ENCODE measurements at regions of chr6 and their contacts with region 1.

Region 1: DNA sequence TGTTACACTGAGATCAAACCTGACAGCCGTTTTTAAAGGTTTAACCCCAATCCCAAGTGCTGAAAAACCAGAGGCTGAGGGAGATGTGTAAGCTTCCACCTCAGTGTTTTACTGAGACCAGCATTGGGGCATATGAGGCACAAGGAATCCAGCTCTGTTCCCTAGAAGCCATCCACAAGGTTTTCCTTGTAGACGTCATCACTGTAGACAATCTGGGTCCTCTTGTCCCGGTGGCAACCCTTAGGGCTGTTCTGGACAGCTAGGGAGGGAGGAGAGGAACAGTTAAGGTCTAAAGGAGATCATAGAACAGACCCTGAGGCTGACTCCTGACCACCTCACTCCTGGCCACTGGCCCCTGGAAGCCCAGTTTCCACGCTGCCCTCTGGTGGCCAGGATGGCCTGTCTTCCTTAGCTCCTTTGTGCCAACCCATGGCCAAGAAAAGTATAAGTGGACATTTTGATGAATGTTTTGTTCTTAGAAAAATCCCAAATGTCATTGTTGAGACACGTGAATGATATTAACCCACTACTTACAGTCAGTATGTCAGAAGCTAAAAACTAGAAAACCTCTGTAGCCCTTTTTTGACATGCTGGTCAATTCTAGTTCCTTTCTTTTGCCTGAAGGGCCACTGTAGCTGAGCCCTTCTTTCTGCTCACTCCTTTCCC is 6.4 kb downstream of the CFB start:
- DNase-seq: peak; percentile 70
- ATAC-seq: peak; percentile 87
- H3K4me3 Mint-ChIP-seq: no peak overlapping the region
- H3K27ac Mint-ChIP-seq: no peak overlapping the region; the same call in 1 of the 2 replicates
- H3K4me1 Mint-ChIP-seq: no peaks in the 10 kb centered on the region
- H3K27me3 Mint-ChIP-seq: peaks cover 18% of the 10 kb centered on the region
- CTCF ChIP-seq: peak; percentile 31

Region 2: DNA sequence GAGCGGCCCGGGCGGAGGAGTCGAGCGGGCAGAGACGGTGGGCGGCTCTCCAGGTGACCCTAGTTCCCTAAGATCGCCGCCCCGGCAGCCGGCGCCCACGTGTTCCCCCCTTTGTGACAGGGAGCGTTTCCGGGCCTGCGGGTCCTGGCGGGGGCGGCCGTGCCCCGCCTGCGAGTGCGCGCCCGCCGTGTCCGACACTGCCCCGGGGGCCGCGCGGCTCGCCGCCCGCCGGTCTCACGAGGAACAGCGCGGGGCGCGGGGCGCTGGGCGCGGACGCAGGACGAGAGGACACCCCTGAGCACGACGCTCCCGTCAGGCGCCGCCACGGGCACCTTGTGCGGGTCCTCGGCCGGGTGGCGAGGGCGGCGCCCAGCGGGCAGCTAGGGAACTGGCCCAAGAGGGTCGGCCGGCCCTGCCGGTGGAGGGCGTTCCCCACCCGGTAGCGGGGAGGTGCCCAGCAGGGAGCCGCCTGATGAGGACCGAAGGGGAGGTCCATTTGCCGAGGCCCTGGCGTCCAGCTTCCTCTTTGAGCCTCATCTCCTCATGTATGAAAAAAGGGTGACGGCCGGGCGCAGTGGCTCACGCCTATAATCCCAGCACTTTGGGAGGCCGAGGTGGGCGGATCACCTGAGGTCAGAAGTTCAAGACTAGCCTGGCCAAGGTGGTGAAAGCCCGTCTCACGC is 156.5 kb before region 1 on chr6 and contains the start of gene VARS1:
- CTCF ChIA-PET with region 1: interaction called, 10 read pairs
- POLR2A ChIA-PET with region 1: no interaction called
- DNase-seq: peak; percentile 96
- ATAC-seq: peak; percentile 84
- H3K4me3 Mint-ChIP-seq: peak within 1 kb of the TSS; percentile 99
- H3K27ac Mint-ChIP-seq: peak within 1 kb of the TSS; percentile 97
- H3K4me1 Mint-ChIP-seq: peaks cover 9% of the 10 kb centered on the region
- H3K27me3 Mint-ChIP-seq: no peaks in the 10 kb centered on the region
- CTCF ChIP-seq: peak; percentile 57
- total RNA-seq, gene VARS1: 147 to 177 TPM (median 161 TPM) in 3 replicates

Region 3: GRCh38 chr6:31907158-31907813 is 45.0 kb before region 1 on chr6:
- CTCF ChIA-PET with region 1: interaction called, 14 read pairs
- POLR2A ChIA-PET with region 1: no interaction called
- DNase-seq: no peak
- ATAC-seq: no peak
- H3K4me3 Mint-ChIP-seq: no peak overlapping the region
- H3K27ac Mint-ChIP-seq: no peak overlapping the region
- H3K4me1 Mint-ChIP-seq: peaks cover 14% of the 10 kb centered on the region
- H3K27me3 Mint-ChIP-seq: peaks cover 5% of the 10 kb centered on the region
- CTCF ChIP-seq: no peak

Region 4: GRCh38 chr6:31940256-31940664 is 12.0 kb before region 1 on chr6:
- CTCF ChIA-PET with region 1: interaction called, 13 read pairs
- POLR2A ChIA-PET with region 1: no interaction called
- DNase-seq: no peak
- ATAC-seq: no peak
- H3K4me3 Mint-ChIP-seq: no peak overlapping the region
- H3K27ac Mint-ChIP-seq: no peak overlapping the region; the same call in 1 of the 2 replicates
- H3K4me1 Mint-ChIP-seq: peaks cover 7% of the 10 kb centered on the region
- H3K27me3 Mint-ChIP-seq: peaks cover 24% of the 10 kb centered on the region
- CTCF ChIP-seq: no peak

Region 5: DNA sequence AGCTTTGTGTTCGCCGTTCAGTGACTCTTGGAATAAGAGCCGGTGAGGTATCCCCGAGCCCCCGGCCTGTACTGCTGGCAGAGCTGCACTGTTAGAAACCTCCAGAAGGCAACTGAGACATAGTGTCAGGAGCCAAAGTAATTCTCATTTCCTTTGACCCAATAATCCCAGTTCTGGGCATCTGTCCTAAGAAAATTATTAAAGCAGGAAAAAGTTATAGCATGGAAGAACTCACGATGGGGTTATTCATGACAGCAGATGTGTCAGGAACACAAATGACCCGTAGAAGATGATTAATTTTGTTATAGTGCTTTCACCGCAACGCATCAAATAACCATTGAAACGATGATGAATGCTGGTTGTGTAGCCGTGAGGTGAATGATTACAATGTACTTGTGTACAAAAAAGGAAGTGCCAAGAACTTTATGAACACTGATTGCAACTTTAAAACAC is 106.3 kb after region 1 on chr6:
- CTCF ChIA-PET with region 1: no interaction called
- POLR2A ChIA-PET with region 1: no interaction called
- DNase-seq: no peak
- ATAC-seq: no peak
- H3K4me3 Mint-ChIP-seq: no peak overlapping the region
- H3K27ac Mint-ChIP-seq: no peak overlapping the region
- H3K4me1 Mint-ChIP-seq: peaks cover 8% of the 10 kb centered on the region
- H3K27me3 Mint-ChIP-seq: no peaks in the 10 kb centered on the region
- CTCF ChIP-seq: no peak